Esophagus muscularis mucosa (tissue), 4 donors: ENCODE measurements at regions of chr3 and their contacts with region 1.

Region 1: DNA sequence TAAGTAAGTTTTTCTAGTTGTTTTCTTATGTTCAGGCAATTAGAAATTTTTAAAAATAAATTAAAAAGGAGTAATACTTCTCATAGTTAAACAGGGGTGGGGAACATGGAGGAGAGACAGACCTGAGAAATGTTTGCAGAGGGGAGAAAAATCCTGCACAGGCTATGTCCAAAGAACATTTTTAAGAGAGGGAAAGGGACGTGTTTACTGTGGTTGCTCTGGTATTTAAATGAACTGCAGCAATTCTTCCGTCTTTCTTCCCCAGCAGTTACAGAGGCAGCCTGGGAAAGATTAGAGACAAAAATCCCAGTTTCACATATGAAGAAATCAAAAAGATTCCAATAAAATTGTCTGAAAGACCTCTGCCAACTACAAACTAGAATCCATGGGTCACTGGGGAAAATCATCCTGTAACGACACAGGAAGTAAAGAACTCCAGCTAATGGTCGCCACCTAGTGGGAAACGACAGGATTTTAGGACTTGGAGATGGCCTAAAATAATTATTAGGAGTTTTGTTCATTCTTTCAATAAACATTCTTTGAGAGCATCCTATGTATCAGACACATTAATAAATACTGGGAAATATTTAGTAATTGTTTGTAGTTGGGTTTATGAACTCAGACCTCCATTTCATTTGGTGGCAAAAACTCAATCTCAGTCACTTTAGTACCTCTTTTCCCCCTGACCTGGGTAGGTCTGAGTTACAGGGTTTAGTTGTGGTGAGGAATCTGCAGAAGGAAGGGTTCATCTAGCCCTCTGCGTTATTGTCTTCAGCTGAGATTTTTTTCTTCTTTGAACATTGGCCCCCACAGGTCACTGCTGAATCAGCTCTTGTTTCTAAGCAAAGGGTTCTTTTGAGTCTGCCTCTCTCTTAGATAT is 69.9 kb upstream of the GOLIM4 start:
- DNase-seq: no peak
- H3K4me3 ChIP-seq: peak overlapping the region in 1 of 4 donors; percentile 10
- H3K27ac ChIP-seq: no peak overlapping the region
- H3K4me1 ChIP-seq: peaks cover 0 to 24% (median 14%) of the 10 kb centered on the region in 4 donors
- H3K27me3 ChIP-seq: no peaks in the 10 kb centered on the region
- CTCF ChIP-seq: peak; percentile 80 to 86 (median 83)
- EP300 ChIP-seq: no peak
- POLR2A ChIP-seq: no peak

Region 2: GRCh38 chr3:168051531-168052471 is 113.8 kb before region 1 on chr3:
- intact Hi-C with region 1: loop called (anchors 2 kb)
- DNase-seq: no peak
- H3K4me3 ChIP-seq: peak overlapping the region in 2 of 4 donors; percentile 7 to 8
- H3K27ac ChIP-seq: peak overlapping the region; percentile 46 to 69 (median 60)
- H3K4me1 ChIP-seq: peaks cover 32 to 46% (median 42%) of the 10 kb centered on the region in 4 donors
- H3K27me3 ChIP-seq: no peaks in the 10 kb centered on the region
- CTCF ChIP-seq: no peak
- EP300 ChIP-seq: no peak
- POLR2A ChIP-seq: no peak

Region 3: GRCh38 chr3:168095611-168096209 is 69.9 kb before region 1 on chr3 and contains the start of gene GOLIM4:
- intact Hi-C with region 1: loop called (anchors 2 kb)
- DNase-seq: peak; percentile 96
- H3K4me3 ChIP-seq: peak within 1 kb of the TSS; percentile 66 to 93 (median 91)
- H3K27ac ChIP-seq: peak within 1 kb of the TSS; percentile 92 to 98 (median 98)
- H3K4me1 ChIP-seq: peaks cover 38 to 48% (median 45%) of the 10 kb centered on the region in 4 donors
- H3K27me3 ChIP-seq: no peaks in the 10 kb centered on the region
- CTCF ChIP-seq: no peak
- EP300 ChIP-seq: no peak
- POLR2A ChIP-seq: peak; percentile 74
- total RNA-seq, gene GOLIM4: 41.7 to 46.5 (median 45.0) TPM

Region 4: GRCh38 chr3:168581771-168582225 is 416.2 kb after region 1 on chr3:
- intact Hi-C with region 1: no loop called
- DNase-seq: no peak
- H3K4me3 ChIP-seq: no peak overlapping the region
- H3K27ac ChIP-seq: no peak overlapping the region
- H3K4me1 ChIP-seq: no peaks in the 10 kb centered on the region
- H3K27me3 ChIP-seq: no peaks in the 10 kb centered on the region
- CTCF ChIP-seq: no peak
- EP300 ChIP-seq: no peak
- POLR2A ChIP-seq: no peak